ENCODE measurements at regions of chr1 and their contacts with region 1.

Region 1: DNA sequence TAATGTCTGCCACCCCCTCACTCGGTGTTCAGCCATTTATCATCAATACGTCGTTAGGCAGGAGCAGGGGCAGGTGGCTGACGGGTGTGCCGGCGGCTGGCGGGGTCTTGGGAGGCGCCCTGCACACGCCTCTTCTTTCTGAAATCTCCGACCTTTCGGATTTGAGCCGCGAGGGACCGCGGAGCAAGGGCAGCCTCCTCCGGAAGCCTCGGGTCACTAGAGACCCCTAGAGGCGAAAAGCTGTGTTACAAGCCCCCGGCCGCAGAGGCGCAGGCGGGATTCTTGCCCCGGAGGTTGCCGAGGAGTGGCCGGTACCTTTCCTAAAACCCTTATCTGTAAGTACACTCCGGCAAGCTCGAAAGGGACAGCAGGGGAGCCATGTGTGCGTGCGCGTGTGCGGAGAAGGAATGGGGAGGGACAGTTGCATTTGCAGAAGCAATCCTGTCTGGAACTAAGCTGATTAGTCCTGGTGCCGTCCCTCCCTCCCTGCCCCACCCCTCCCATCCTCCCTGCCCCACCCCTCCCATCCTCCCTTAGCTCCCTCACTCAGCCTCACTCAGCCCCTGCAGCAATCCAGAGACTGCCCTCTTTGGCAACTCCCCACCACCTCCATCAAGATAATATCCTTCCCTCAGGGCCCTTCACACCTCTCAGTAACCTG is 11.0 kb downstream of the BRINP2 start:
- DNase-seq: no peak
- ATAC-seq: peak; percentile 98
- H3K4me3 ChIP-seq: no peak overlapping the region
- H3K27ac ChIP-seq: no peak overlapping the region
- H3K4me1 ChIP-seq: no peaks in the 10 kb centered on the region
- H3K27me3 ChIP-seq: peaks cover 0 to 7% of the 10 kb centered on the region in 2 experiments; a peak in 3 of 4 replicates
- CTCF ChIP-seq: peak; percentile 71 to 84 (median 77)
- EP300 ChIP-seq: no peak
- POLR2A ChIP-seq: no peak
- RAD21 ChIP-seq: peak; percentile 63

Region 2: DNA sequence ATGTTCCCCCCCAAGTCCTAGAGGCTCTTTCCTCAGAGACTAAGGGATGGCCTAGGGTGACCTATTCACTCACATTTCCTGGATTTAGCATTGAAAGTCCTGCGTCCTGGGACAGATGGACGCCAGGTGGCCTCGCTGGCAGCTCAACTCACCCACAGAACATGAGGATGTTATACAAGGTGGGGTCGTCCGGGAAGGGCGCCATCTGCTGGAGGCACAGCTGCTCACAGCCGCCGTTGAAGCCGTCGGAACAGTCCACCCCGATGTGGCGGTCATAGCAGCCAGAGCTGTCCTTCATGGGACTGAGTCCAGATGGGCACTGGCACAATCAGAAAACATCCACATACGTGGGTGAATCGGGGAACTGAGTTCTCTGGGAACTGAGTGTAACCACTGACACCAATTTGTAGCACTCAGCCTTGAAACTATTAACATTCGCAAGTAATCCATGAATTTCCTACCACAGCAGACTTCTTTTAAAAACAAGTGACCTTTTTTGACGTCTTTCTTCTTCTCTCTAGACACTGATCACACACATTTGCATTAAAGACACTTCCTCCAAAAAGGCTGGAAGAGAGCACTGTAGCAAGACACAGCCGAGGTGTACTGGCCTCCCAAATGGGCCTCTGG is 232.6 kb before region 1 on chr1:
- CTCF ChIA-PET with region 1: interaction called, 3 read pairs
- POLR2A ChIA-PET with region 1: no interaction called
- RAD21 ChIA-PET with region 1: no interaction called
- SMC1A ChIA-PET with region 1: interaction called, 3 read pairs
- in situ Hi-C with region 1: no loop called
- intact Hi-C with region 1: loop called (anchors 5 kb)
- DNase-seq: no peak
- ATAC-seq: peak; percentile 99
- H3K4me3 ChIP-seq: no peak overlapping the region
- H3K27ac ChIP-seq: no peak overlapping the region
- H3K4me1 ChIP-seq: no peaks in the 10 kb centered on the region
- H3K27me3 ChIP-seq: no peaks in the 10 kb centered on the region
- CTCF ChIP-seq: peak; percentile 60 to 74 (median 73)
- EP300 ChIP-seq: no peak
- POLR2A ChIP-seq: no peak
- RAD21 ChIP-seq: 0 out of 2 replicates have a peak, but pooled peaks have one; percentile 31

Region 3: DNA sequence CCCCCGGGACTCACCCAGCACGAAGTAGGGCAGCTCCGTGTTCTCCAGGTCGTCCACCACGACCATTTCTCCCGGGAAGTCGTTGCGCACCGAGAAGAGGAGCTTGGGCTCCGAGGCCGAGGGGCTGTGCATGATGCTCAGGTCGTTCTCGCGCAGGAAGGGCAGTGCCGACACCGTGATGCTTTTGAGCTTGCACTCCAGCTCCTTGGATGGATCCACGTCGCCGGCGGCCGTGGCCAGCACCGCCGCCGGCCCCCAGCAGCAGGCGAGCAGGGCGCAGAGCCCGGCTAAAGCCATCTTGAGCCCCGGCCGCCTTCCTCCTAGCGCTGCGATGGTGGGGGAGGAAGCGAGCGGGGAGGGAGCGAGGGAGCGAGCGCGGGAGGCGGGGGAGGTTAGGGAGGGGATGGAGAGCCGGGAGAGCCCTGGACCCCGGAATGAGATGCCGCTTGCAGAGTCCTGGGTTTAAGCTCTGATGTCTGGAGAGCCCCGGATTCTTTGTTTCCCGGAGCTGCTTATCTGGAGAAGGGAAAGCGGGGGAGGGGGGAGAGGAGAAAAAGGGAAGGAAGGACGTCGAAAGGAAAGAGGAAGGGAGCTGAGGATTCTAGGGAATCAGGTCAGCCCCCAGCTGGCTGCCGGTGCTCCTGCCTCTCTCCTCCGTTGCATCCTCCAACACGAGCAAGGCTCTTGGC is 17.2 kb before region 1 on chr1 and contains the start of gene ASTN1:
- CTCF ChIA-PET with region 1: interaction called, 12 read pairs
- POLR2A ChIA-PET with region 1: no interaction called
- RAD21 ChIA-PET with region 1: no interaction called
- SMC1A ChIA-PET with region 1: interaction called, 3 read pairs
- in situ Hi-C with region 1: no loop called
- intact Hi-C with region 1: no loop called
- DNase-seq: no peak
- ATAC-seq: no peak
- H3K4me3 ChIP-seq: no peak within 1 kb of the TSS
- H3K27ac ChIP-seq: no peak within 1 kb of the TSS
- H3K4me1 ChIP-seq: no peaks in the 10 kb centered on the region
- H3K27me3 ChIP-seq: peaks cover 0 to 2% of the 10 kb centered on the region in 2 experiments; a peak in 3 of 4 replicates
- CTCF ChIP-seq: no peak
- EP300 ChIP-seq: no peak
- POLR2A ChIP-seq: no peak
- RAD21 ChIP-seq: no peak
- polyA plus RNA-seq, gene ASTN1: not detected

Region 4: GRCh38 chr1:177239792-177240191 is 58.0 kb after region 1 on chr1:
- CTCF ChIA-PET with region 1: no interaction called
- POLR2A ChIA-PET with region 1: no interaction called
- RAD21 ChIA-PET with region 1: no interaction called
- SMC1A ChIA-PET with region 1: no interaction called
- in situ Hi-C with region 1: no loop called
- intact Hi-C with region 1: no loop called
- DNase-seq: no peak
- ATAC-seq: no peak
- H3K4me3 ChIP-seq: no peak overlapping the region
- H3K27ac ChIP-seq: no peak overlapping the region
- H3K4me1 ChIP-seq: no peaks in the 10 kb centered on the region
- H3K27me3 ChIP-seq: no peaks in the 10 kb centered on the region; a peak in 1 of 4 replicates
- CTCF ChIP-seq: no peak
- EP300 ChIP-seq: no peak
- POLR2A ChIP-seq: no peak
- RAD21 ChIP-seq: no peak

Measured in GM12878 (cell line).